Mucosa of descending colon (tissue), 3 donors: ENCODE measurements at regions of chr16 and their contacts with region 1.

Region 1: GRCh38 chr16:19393226-19394074 is 24.2 kb upstream of the TMC5 start:
- DNase-seq: peak in 2 of 3 donors; percentile 59 to 80
- ATAC-seq: peak; percentile 31
- H3K4me3 ChIP-seq: no peak overlapping the region
- H3K4me1 ChIP-seq: peaks cover 15% of the 10 kb centered on the region
- CTCF ChIP-seq: no peak

Region 2: GRCh38 chr16:19517418-19518089 is 124.1 kb after region 1 on chr16:
- intact Hi-C with region 1: loop called in 1 of 2 experiments (anchors 10 kb)
- DNase-seq: no peak
- ATAC-seq: no peak
- H3K4me3 ChIP-seq: no peak overlapping the region
- H3K4me1 ChIP-seq: peaks cover 56% of the 10 kb centered on the region
- CTCF ChIP-seq: no peak